Heart right ventricle (tissue), 16 donors: ENCODE measurements at regions of chr2 and their contacts with region 1.

Region 1: GRCh38 chr2:67840460-67841068 is 222.2 kb downstream of the C1D start:
- DNase-seq: peak; percentile 63 to 66
- ATAC-seq: peak; percentile 91 to 98 (median 96)
- H3K4me3 ChIP-seq: no peak overlapping the region
- H3K27ac ChIP-seq: no peak overlapping the region
- H3K4me1 ChIP-seq: no peaks in the 10 kb centered on the region
- H3K27me3 ChIP-seq: no peaks in the 10 kb centered on the region
- CTCF ChIP-seq: peak; percentile 49 to 88 (median 76)

Region 2: GRCh38 chr2:66013465-66013864 is 1827.1 kb before region 1 on chr2:
- intact Hi-C with region 1: loop called in 1 of 10 experiments (anchors 10 kb)
- DNase-seq: no peak
- ATAC-seq: no peak
- H3K4me3 ChIP-seq: no peak overlapping the region
- H3K27ac ChIP-seq: no peak overlapping the region
- H3K4me1 ChIP-seq: no peaks in the 10 kb centered on the region
- H3K27me3 ChIP-seq: peaks cover 0 to under 1% (median 0%) of the 10 kb centered on the region in 7 donors
- CTCF ChIP-seq: peak in 3 of 9 donors; percentile 33 to 42 (median 42)

Region 3: DNA sequence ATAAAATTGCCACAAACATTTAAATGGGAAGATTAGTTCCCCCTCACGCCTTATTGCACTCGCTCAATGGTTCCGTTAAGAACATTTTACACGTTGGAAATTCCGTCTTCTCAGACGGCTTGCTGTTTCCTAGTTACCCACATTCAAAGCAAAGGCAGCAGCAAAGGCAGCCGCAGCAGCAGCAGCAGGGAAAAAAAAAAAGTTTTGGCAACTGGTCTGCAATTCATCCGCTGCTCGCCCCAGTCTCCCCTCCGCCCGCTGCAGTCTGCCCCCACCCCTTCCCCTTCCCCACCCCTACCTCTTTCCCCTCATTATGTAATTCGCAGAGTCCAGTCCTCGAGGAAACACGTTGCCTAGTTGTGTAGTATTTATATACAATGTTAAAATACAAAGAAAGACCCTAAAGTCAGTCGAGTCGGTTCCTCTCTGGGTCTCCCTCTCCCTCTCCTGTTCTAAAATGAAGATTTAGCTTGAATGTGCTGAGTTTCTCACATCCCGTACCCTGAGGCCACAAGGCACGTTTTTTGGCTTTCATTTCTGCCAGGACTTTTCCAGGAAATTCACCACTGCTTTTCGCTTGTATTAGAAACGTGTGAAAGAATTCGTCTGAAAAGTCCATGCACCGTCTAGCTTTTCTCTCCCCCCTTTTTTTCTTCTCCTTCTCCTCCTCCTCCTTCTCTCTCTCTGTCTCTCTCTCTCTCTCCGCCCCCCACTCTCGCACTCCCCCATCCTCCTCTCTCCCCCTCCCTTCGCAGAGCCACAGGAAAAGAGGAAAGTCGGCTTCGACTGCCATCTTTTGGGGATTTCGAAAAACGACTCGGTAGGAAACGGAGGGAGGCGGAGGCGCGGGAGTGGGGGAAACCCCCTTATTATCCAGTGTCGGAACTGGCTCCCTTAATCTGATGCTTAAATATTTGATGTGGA is 1265.6 kb before region 1 on chr2:
- intact Hi-C with region 1: loop called in 7 of 10 experiments (anchors 5 to 10 kb)
- DNase-seq: peak; percentile 27 to 77
- ATAC-seq: peak; percentile 68 to 83 (median 76)
- H3K4me3 ChIP-seq: peak overlapping the region in 9 of 10 donors; percentile 30 to 63 (median 50)
- H3K27ac ChIP-seq: peak overlapping the region in 5 of 10 donors; percentile 9 to 64 (median 56)
- H3K4me1 ChIP-seq: peaks cover 16 to 46% (median 23%) of the 10 kb centered on the region in 9 donors
- H3K27me3 ChIP-seq: peaks cover 13 to 73% (median 46%) of the 10 kb centered on the region in 7 donors
- CTCF ChIP-seq: peak in 8 of 9 donors; percentile 21 to 70 (median 50)

Region 4: GRCh38 chr2:67476809-67477790 is 363.5 kb before region 1 on chr2:
- intact Hi-C with region 1: loop called in 1 of 10 experiments (anchors 10 kb)
- DNase-seq: no peak
- ATAC-seq: peak in 5 of 8 donors; percentile 37 to 65 (median 53)
- H3K4me3 ChIP-seq: no peak overlapping the region
- H3K27ac ChIP-seq: peak overlapping the region in 1 of 10 donors; percentile 69
- H3K4me1 ChIP-seq: peaks cover 0 to 6% (median 0%) of the 10 kb centered on the region in 9 donors
- H3K27me3 ChIP-seq: no peaks in the 10 kb centered on the region
- CTCF ChIP-seq: peak in 7 of 9 donors; percentile 43 to 62 (median 50)

Region 5: GRCh38 chr2:67671464-67672450 is 168.8 kb before region 1 on chr2:
- intact Hi-C with region 1: loop called in 3 of 10 experiments (anchors 10 kb)
- DNase-seq: no peak
- ATAC-seq: peak in 1 of 8 donors; percentile 33
- H3K4me3 ChIP-seq: no peak overlapping the region
- H3K27ac ChIP-seq: no peak overlapping the region
- H3K4me1 ChIP-seq: peaks cover 0 to 17% (median 10%) of the 10 kb centered on the region in 9 donors
- H3K27me3 ChIP-seq: no peaks in the 10 kb centered on the region
- CTCF ChIP-seq: no peak